ENCODE measurements at regions of chr11 and their contacts with region 1.

Region 1: DNA sequence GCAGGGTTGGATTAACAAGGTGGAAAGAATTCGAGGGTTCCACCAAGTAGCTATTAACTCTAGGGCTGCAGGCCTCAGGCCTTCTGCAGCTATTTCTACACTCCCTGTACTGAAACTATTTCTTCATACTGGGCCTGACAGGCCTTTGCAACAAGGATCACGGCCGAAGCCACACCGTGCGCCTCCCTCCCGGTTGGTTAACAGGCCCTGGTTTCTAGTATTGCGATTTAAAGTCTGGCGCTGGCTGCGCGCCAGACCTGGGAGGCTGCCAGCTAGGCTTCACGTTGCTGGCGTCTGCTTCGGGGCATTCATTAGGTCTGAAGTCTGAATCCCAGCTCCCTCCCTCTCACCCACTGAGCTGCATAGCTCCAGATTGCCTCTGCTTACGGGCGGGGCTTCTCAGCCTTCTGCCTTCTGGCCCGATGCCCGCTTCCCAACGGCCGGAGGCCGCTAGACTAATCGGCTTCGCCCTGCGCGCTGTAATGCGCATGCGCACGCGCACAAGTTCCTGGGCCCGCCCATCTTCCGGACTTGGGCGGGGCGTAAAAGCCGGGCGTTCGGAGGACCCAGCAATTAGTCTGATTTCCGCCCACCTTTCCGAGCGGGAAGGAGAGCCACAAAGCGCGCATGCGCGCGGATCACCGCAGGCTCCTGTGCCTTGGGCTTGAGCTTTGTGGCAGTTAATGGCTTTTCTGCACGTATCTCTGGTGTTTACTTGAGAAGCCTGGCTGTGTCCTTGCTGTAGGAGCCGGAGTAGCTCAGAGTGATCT is 1.6 kb downstream of the LDHA start:
- DNase-seq: peak; percentile 87 to 98 (median 95)
- ATAC-seq: peak; percentile 78
- H3K4me3 ChIP-seq: peak overlapping the region; percentile 78
- H3K4me3 Mint-ChIP-seq: peak overlapping the region; percentile 96 to 99 (median 98)
- H3K27ac ChIP-seq: peak overlapping the region; percentile 95
- H3K27ac Mint-ChIP-seq: peak overlapping the region; percentile 94 to 98 (median 96)
- H3K4me1 ChIP-seq: peaks cover 12 to 14% of the 10 kb centered on the region in 2 donors
- H3K4me1 Mint-ChIP-seq: peaks cover 14 to 63% (median 32%) of the 10 kb centered on the region in 7 donors
- H3K27me3 ChIP-seq: no peaks in the 10 kb centered on the region
- H3K27me3 Mint-ChIP-seq: no peaks in the 10 kb centered on the region

Region 2: GRCh38 chr11:17077520-17078401 is 1318.2 kb before region 1 on chr11 and contains the start of gene RPS13:
- CTCF ChIA-PET with region 1: no interaction called
- POLR2A ChIA-PET with region 1: no interaction called
- intact Hi-C with region 1: loop called in 1 of 2 experiments (anchors 10 kb)
- DNase-seq: peak; percentile 76 to 95 (median 93)
- ATAC-seq: peak; percentile 98
- H3K4me3 ChIP-seq: peak within 1 kb of the TSS; percentile 87
- H3K4me3 Mint-ChIP-seq: peak within 1 kb of the TSS; percentile 91 to 99 (median 98)
- H3K27ac ChIP-seq: peak within 1 kb of the TSS; percentile 91
- H3K27ac Mint-ChIP-seq: peak within 1 kb of the TSS; percentile 96 to 99 (median 99)
- H3K4me1 ChIP-seq: peaks cover 12 to 27% of the 10 kb centered on the region in 2 donors
- H3K4me1 Mint-ChIP-seq: peaks cover 25 to 60% (median 37%) of the 10 kb centered on the region in 7 donors
- H3K27me3 ChIP-seq: no peaks in the 10 kb centered on the region
- H3K27me3 Mint-ChIP-seq: no peaks in the 10 kb centered on the region
- total RNA-seq, gene RPS13: 1,062 to 2,591 (median 2,234) TPM

Region 3: DNA sequence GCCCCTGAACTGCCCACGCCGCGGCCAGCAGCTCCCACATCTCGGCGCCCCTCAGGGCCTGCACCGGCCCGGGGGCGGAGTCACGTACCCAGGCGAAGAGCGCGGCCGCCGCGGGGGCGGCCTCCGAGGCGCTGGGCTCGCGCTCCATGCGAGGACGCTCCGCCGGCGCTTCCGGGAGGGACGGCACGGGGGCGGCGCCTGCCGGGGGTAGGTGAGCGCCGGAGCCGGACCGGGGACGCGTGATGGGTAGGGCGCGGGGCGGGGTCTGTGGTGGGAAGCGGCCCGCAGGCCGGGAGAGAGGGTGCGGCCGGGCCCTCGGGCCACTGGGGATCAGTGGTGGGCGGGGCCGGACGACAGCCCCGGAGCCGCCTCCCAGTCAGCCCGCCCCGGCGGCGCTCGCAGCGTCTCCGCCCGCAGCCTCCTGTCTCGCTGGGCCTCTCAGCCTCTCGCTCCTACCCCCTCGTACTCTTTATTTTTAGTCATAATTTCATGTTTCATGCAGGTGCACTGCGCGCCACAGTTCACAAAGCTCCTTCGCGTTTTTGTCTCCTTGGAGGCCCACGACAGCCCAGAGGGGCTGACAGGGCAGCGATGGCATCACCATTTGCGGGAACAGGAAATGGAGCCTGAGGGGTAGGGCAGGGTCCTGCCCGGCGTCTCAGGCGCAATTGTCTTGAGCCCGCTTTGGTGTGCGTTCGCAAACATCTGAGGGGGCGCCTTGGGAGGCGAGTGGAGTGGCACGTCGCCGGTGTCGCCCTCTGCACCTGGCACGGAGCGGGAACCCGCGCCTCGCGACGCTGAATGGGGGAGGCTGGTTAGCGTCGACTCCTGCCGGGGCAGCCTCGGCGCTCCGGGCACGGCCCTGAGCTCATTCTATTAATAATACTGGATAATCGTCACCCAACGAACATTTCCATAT is 382.8 kb before region 1 on chr11 and contains the start of gene SERGEF:
- CTCF ChIA-PET with region 1: no interaction called
- POLR2A ChIA-PET with region 1: interaction called, 3 read pairs
- intact Hi-C with region 1: loop called (anchors 1 to 2 kb)
- DNase-seq: peak; percentile 81 to 96 (median 87)
- ATAC-seq: peak; percentile 93
- H3K4me3 ChIP-seq: peak within 1 kb of the TSS; percentile 85
- H3K4me3 Mint-ChIP-seq: peak within 1 kb of the TSS; percentile 93 to 100 (median 98)
- H3K27ac ChIP-seq: peak within 1 kb of the TSS; percentile 84
- H3K27ac Mint-ChIP-seq: peak within 1 kb of the TSS; percentile 89 to 99 (median 99)
- H3K4me1 ChIP-seq: peaks cover 10% of the 10 kb centered on the region in 2 donors
- H3K4me1 Mint-ChIP-seq: peaks cover 17 to 47% (median 37%) of the 10 kb centered on the region in 7 donors
- H3K27me3 ChIP-seq: no peaks in the 10 kb centered on the region
- H3K27me3 Mint-ChIP-seq: no peaks in the 10 kb centered on the region
- total RNA-seq, gene SERGEF: 35.0 to 57.7 (median 52.9) TPM

Region 4: GRCh38 chr11:18321980-18322711 is 73.8 kb before region 1 on chr11 and contains the starts of genes GTF2H1 and HPS5:
- CTCF ChIA-PET with region 1: interaction called, 3 read pairs
- POLR2A ChIA-PET with region 1: interaction called, 85 read pairs
- intact Hi-C with region 1: loop called (anchors 1 kb)
- DNase-seq: peak; percentile 88 to 99 (median 98)
- ATAC-seq: peak; percentile 93
- H3K4me3 ChIP-seq: peak within 1 kb of the TSS; percentile 96
- H3K4me3 Mint-ChIP-seq: peak within 1 kb of the TSS; percentile 85 to 100 (median 94)
- H3K27ac ChIP-seq: peak within 1 kb of the TSS; percentile 97
- H3K27ac Mint-ChIP-seq: peak within 1 kb of the TSS; percentile 99 to 100 (median 100)
- H3K4me1 ChIP-seq: peaks cover 32 to 33% of the 10 kb centered on the region in 2 donors
- H3K4me1 Mint-ChIP-seq: peaks cover 53 to 91% (median 81%) of the 10 kb centered on the region in 7 donors
- H3K27me3 ChIP-seq: no peaks in the 10 kb centered on the region
- H3K27me3 Mint-ChIP-seq: peaks cover 0 to 2% (median 0%) of the 10 kb centered on the region in 5 donors
- total RNA-seq, gene GTF2H1: 26.3 to 63.2 (median 59.0) TPM
- total RNA-seq, gene HPS5: 13.0 to 22.3 (median 16.6) TPM

Region 5: GRCh38 chr11:18383388-18384156 is 12.3 kb before region 1 on chr11:
- CTCF ChIA-PET with region 1: interaction called, 14 read pairs
- POLR2A ChIA-PET with region 1: interaction called, 123 read pairs
- intact Hi-C with region 1: loop called (anchors 1 kb)
- DNase-seq: peak; percentile 15 to 74 (median 70)
- ATAC-seq: peak; percentile 87
- H3K4me3 ChIP-seq: peak overlapping the region; percentile 49
- H3K4me3 Mint-ChIP-seq: peak overlapping the region; percentile 70 to 83 (median 80)
- H3K27ac ChIP-seq: peak overlapping the region; percentile 85
- H3K27ac Mint-ChIP-seq: peak overlapping the region; percentile 92 to 100 (median 98)
- H3K4me1 ChIP-seq: peaks cover 20 to 21% of the 10 kb centered on the region in 2 donors
- H3K4me1 Mint-ChIP-seq: peaks cover 29 to 53% (median 45%) of the 10 kb centered on the region in 7 donors
- H3K27me3 ChIP-seq: no peaks in the 10 kb centered on the region
- H3K27me3 Mint-ChIP-seq: no peaks in the 10 kb centered on the region

Region 6: GRCh38 chr11:18438691-18439090 is 42.8 kb after region 1 on chr11:
- CTCF ChIA-PET with region 1: no interaction called
- POLR2A ChIA-PET with region 1: no interaction called
- intact Hi-C with region 1: no loop called
- DNase-seq: no peak
- ATAC-seq: no peak
- H3K4me3 ChIP-seq: no peak overlapping the region
- H3K4me3 Mint-ChIP-seq: no peak overlapping the region
- H3K27ac ChIP-seq: no peak overlapping the region
- H3K27ac Mint-ChIP-seq: no peak overlapping the region
- H3K4me1 ChIP-seq: no peaks in the 10 kb centered on the region
- H3K4me1 Mint-ChIP-seq: no peaks in the 10 kb centered on the region
- H3K27me3 ChIP-seq: no peaks in the 10 kb centered on the region
- H3K27me3 Mint-ChIP-seq: no peaks in the 10 kb centered on the region

Region 7: GRCh38 chr11:18471995-18472394 is 76.1 kb after region 1 on chr11:
- CTCF ChIA-PET with region 1: no interaction called
- POLR2A ChIA-PET with region 1: no interaction called
- intact Hi-C with region 1: no loop called
- DNase-seq: no peak
- ATAC-seq: no peak
- H3K4me3 ChIP-seq: no peak overlapping the region
- H3K4me3 Mint-ChIP-seq: no peak overlapping the region
- H3K27ac ChIP-seq: no peak overlapping the region
- H3K27ac Mint-ChIP-seq: no peak overlapping the region
- H3K4me1 ChIP-seq: no peaks in the 10 kb centered on the region
- H3K4me1 Mint-ChIP-seq: no peaks in the 10 kb centered on the region
- H3K27me3 ChIP-seq: no peaks in the 10 kb centered on the region
- H3K27me3 Mint-ChIP-seq: no peaks in the 10 kb centered on the region

Region 8: DNA sequence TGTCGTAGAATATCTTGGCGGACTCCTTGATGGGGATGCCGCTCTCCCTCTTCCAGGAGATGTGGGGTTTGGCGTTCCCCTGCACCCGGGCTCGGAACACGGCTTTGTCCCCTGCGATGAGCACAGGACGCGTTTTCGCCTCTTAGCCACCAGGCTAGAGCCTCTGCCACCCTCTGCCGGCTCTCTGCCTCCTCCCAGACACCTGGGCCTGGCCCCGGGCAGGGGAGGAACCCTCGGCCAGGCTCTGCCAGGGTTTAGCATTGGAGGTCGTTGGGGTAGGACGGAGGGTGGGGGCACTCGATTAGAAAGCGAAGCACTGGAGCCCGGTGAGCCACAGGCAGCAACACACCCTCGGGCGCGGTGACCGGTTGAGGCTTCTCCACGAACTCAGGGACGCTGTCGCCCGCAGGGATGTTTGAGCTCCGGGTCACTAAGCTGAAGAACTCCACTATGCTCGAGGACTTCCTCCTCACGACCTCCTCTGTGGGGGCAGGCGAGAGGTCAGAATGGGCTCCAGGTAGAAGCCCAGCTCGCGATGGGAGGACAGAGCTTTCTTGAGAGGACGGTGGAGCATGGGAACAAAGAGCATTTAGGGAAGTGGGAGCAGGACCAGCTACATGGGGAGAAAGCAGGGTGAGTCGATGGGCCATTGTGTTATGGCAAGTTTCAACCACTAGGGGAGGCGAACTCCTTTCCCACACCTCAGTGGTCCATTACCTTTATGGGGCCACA is 325.8 kb after region 1 on chr11:
- CTCF ChIA-PET with region 1: no interaction called
- POLR2A ChIA-PET with region 1: no interaction called
- intact Hi-C with region 1: loop called in 1 of 2 experiments (anchors 1 kb)
- DNase-seq: peak; percentile 15 to 51 (median 37)
- ATAC-seq: peak; percentile 61
- H3K4me3 ChIP-seq: peak overlapping the region; percentile 72
- H3K4me3 Mint-ChIP-seq: peak overlapping the region; percentile 82 to 97 (median 92)
- H3K27ac ChIP-seq: peak overlapping the region; percentile 46
- H3K27ac Mint-ChIP-seq: peak overlapping the region in 6 of 9 donors; percentile 39 to 89 (median 76)
- H3K4me1 ChIP-seq: peaks cover 0 to 5% of the 10 kb centered on the region in 2 donors
- H3K4me1 Mint-ChIP-seq: peaks cover 8 to 15% (median 9%) of the 10 kb centered on the region in 7 donors
- H3K27me3 ChIP-seq: no peaks in the 10 kb centered on the region
- H3K27me3 Mint-ChIP-seq: peaks cover 0 to 34% (median 0%) of the 10 kb centered on the region in 5 donors

Region 9: GRCh38 chr11:18791207-18791968 is 395.5 kb after region 1 on chr11 and contains the start of gene PTPN5:
- CTCF ChIA-PET with region 1: no interaction called
- POLR2A ChIA-PET with region 1: no interaction called
- intact Hi-C with region 1: no loop called
- DNase-seq: no peak
- ATAC-seq: no peak
- H3K4me3 ChIP-seq: no peak within 1 kb of the TSS
- H3K4me3 Mint-ChIP-seq: peak within 1 kb of the TSS in 6 of 10 donors; percentile 9 to 69 (median 36)
- H3K27ac ChIP-seq: no peak within 1 kb of the TSS
- H3K27ac Mint-ChIP-seq: no peak within 1 kb of the TSS
- H3K4me1 ChIP-seq: no peaks in the 10 kb centered on the region
- H3K4me1 Mint-ChIP-seq: peaks cover 0 to 8% (median 5%) of the 10 kb centered on the region in 7 donors
- H3K27me3 ChIP-seq: no peaks in the 10 kb centered on the region
- H3K27me3 Mint-ChIP-seq: peaks cover 33 to 73% (median 60%) of the 10 kb centered on the region in 5 donors
- total RNA-seq, gene PTPN5: not detected

Region 10: DNA sequence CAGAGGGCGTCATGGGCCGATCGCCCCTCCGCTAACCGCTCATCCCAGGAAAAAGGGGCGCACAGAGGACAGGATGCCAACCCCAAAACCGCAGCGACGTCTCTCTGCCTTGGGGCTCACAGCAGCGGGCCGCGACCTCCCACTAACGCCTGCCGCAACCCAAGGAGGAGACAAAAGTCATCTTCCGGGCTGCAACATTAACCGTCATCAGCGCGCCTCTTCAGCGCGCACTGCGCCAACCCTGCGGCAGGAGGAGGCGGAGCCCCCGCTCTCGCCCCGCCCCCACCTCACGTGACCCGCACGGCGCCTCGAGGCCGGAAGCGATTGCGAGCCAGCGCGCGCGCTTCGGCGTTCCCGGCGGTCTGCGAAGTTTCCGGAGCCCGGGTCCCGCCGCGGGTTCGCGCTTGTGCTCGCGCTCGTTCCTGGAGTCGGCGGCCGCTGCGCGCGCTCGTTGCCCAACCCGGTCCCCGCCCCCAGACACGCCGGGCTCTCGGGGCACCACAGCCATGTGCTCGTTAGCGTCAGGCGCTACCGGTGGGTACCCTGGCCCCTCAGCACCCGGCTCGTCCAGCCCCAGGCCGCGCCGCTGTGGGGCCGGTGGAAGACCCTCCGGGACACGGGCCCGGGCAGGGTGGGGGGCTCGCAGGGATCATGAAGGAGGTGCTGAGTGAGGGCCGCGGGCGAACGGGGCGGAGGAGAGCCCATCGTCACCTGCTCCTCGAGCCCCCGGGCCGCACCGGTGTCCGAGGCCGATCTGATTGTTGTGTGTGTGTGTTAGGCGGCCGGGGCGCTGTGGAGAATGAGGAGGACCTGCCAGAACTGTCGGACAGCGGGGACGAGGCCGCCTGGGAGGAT is 1991.5 kb after region 1 on chr11 and contains the start of gene PRMT3:
- CTCF ChIA-PET with region 1: no interaction called
- POLR2A ChIA-PET with region 1: no interaction called
- intact Hi-C with region 1: loop called (anchors 5 to 10 kb)
- DNase-seq: peak; percentile 96 to 99 (median 98)
- ATAC-seq: peak; percentile 95
- H3K4me3 ChIP-seq: peak within 1 kb of the TSS; percentile 65
- H3K4me3 Mint-ChIP-seq: peak within 1 kb of the TSS; percentile 96 to 100 (median 98)
- H3K27ac ChIP-seq: peak within 1 kb of the TSS; percentile 87
- H3K27ac Mint-ChIP-seq: peak within 1 kb of the TSS; percentile 96 to 100 (median 100)
- H3K4me1 ChIP-seq: peaks cover 14% of the 10 kb centered on the region in 2 donors
- H3K4me1 Mint-ChIP-seq: peaks cover 9 to 37% (median 26%) of the 10 kb centered on the region in 7 donors
- H3K27me3 ChIP-seq: no peaks in the 10 kb centered on the region
- H3K27me3 Mint-ChIP-seq: no peaks in the 10 kb centered on the region
- total RNA-seq, gene PRMT3: 12.5 to 19.0 (median 17.7) TPM

Measured in naive thymus-derived CD4-positive, alpha-beta T cell (primary cell).